ENCODE measurements at regions of chr6 and their contacts with region 1.

Region 1: GRCh38 chr6:156686995-156687788 is 90.0 kb upstream of the ARID1B start:
- DNase-seq: peak; percentile 81 to 97 (median 92)

Region 2: DNA sequence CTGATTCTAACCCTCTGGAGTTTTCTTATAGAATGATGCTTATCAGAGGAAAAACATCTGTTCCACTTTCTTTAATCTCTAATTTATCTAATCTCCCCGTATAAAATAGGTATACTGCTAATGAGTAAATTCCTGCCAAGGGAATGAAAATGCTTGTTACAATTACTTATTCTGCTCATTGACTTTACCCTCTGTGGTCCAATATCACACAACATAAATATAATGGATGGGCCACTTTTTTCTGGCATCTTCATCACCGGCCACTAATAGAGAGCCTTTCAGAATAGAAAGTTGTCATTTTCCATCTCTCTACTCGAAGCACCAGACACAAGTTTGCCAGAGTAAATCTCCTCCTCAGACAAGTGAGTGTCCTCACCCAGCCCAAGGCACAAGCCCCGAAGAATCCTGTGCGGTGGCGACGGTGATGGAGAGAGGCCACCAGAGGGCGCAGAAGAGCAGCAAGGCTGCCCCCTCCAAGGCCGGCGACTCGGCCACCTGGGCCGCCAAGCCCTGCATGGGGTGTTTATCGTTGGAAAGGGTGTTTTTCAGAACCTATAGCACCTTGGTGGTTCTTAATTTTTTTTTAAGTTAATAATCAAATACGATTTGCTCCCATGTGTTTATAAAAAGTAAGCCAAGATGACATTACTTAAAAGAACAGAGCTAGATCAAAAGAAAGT is 122.9 kb before region 1 on chr6:
- intact Hi-C with region 1: loop called (anchors 2 kb)
- DNase-seq: peak; percentile 61 to 95 (median 84)

Region 3: DNA sequence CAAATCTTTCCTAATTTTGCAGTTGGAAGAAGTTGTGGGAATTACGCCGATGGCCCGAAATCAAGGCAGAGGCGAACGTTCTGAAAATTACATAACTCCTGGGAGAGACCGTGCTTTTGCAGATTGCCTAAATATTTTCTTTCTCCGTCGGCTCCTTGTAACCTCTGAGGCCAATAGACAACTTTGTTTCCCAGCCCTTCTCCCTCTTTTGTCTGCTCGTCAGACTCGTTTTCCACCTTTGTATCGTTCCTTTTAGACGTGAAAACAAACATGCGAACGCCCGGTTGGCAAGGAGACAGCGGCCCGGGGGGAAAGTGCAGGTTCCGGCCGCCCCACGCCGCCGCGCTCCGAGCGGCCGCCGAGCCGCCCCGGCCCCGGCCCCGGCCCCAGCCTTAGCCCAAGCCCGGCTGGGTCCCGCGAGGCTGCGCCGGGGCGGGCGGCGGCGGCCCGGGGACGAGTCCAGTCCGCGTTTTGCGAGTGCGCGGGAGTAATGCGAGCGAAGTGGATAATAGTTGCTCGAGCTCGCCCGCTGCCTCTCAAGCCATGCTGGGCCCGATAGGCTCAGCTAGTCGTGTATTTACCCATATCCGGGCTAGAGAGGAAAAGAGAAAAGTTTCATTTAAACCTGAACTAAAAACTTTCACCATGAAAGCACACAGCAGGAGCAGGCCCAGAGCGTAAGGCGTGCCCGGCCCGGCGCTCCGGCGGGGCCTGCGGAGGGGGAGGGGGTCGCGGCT is 89.8 kb after region 1 on chr6 and contains the start of gene ARID1B:
- intact Hi-C with region 1: loop called (anchors 2 kb)
- DNase-seq: peak; percentile 57 to 92 (median 81)

Region 4: GRCh38 chr6:157021344-157021992 is 334.3 kb after region 1 on chr6:
- intact Hi-C with region 1: loop called (anchors 5 kb)
- DNase-seq: peak; percentile 81 to 97 (median 92)

Region 5: DNA sequence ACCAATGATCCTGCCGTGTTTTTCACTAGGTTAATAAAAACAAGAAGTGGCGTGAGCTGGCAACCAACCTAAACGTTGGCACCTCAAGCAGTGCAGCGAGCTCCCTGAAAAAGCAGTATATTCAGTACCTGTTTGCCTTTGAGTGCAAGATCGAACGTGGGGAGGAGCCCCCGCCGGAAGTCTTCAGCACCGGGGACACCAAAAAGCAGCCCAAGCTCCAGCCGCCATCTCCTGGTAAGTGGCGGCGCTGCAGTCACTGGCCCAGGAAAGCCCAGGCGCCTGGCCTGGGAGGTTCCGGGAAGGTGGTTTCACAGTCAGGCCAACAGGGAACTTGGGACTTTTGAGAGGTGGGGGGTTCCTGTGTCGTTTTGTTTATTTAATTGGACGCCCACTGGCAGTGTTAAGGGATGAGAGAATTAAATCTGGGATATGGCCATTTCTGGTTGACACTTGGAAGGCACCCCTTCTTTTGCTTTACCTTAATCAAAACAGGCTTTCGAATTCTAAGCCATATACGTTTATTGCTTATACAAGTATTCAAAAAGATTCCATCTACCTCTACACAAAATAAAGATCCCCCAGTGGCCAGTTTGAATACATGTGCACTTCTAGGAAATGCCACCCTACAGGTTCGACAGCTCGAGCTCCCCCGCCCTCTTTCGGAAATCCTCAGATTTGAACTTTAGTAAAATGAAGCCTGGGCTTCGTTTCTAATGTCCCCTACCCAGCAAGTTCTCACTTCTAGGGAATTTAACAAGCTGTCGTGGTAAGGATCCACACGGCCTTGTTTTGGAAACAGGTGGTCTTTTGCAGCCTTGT is 497.2 kb after region 1 on chr6:
- intact Hi-C with region 1: loop called (anchors 10 kb)
- DNase-seq: peak; percentile 65 to 93 (median 80)

Measured in head of caudate nucleus (tissue), 42 donors.